ENCODE measurements at regions of chr17 and their contacts with region 1.

Region 1: GRCh38 chr17:37438141-37438540 is 31.5 kb downstream of the TADA2A start:
- DNase-seq: peak in 1 of 2 experiments; percentile 26
- ATAC-seq: peak; percentile 48 to 59; a peak in 2 of 6 replicates
- H3K4me3 ChIP-seq: no peak overlapping the region
- H3K27ac ChIP-seq: no peak overlapping the region
- H3K4me1 ChIP-seq: no peaks in the 10 kb centered on the region
- CTCF ChIP-seq: peak; percentile 55
- EP300 ChIP-seq: no peak
- POLR2A ChIP-seq: no peak
- RAD21 ChIP-seq: peak in 1 of 2 experiments; percentile 26; a peak in 2 of 5 replicates

Region 2: GRCh38 chr17:37458805-37459204 is 20.7 kb after region 1 on chr17:
- CTCF ChIA-PET with region 1: interaction called, 10 read pairs
- POLR2A ChIA-PET with region 1: no interaction called
- DNase-seq: peak in 1 of 2 experiments; percentile 44
- ATAC-seq: peak; percentile 13 to 75; a peak in 4 of 6 replicates
- H3K4me3 ChIP-seq: no peak overlapping the region
- H3K27ac ChIP-seq: peak overlapping the region in 1 of 2 experiments; percentile 38; a peak in 1 of 6 replicates
- H3K4me1 ChIP-seq: peaks cover 6% of the 10 kb centered on the region; the same call in 2 of the 3 replicates
- CTCF ChIP-seq: no peak
- EP300 ChIP-seq: no peak
- POLR2A ChIP-seq: no peak
- RAD21 ChIP-seq: no peak

Measured in A549 (cell line).